Mammary epithelial cell (primary cell): ENCODE measurements at regions of chr7 and their contacts with region 1.

Region 1: GRCh38 chr7:44617225-44617890 is 10.9 kb downstream of the OGDH start:
- DNase-seq: peak; percentile 70
- H3K4me3 ChIP-seq: no peak overlapping the region
- H3K27ac ChIP-seq: peak overlapping the region; percentile 33
- H3K4me1 ChIP-seq: peaks cover 25% of the 10 kb centered on the region
- H3K27me3 ChIP-seq: no peaks in the 10 kb centered on the region
- CTCF ChIP-seq: no peak

Region 2: DNA sequence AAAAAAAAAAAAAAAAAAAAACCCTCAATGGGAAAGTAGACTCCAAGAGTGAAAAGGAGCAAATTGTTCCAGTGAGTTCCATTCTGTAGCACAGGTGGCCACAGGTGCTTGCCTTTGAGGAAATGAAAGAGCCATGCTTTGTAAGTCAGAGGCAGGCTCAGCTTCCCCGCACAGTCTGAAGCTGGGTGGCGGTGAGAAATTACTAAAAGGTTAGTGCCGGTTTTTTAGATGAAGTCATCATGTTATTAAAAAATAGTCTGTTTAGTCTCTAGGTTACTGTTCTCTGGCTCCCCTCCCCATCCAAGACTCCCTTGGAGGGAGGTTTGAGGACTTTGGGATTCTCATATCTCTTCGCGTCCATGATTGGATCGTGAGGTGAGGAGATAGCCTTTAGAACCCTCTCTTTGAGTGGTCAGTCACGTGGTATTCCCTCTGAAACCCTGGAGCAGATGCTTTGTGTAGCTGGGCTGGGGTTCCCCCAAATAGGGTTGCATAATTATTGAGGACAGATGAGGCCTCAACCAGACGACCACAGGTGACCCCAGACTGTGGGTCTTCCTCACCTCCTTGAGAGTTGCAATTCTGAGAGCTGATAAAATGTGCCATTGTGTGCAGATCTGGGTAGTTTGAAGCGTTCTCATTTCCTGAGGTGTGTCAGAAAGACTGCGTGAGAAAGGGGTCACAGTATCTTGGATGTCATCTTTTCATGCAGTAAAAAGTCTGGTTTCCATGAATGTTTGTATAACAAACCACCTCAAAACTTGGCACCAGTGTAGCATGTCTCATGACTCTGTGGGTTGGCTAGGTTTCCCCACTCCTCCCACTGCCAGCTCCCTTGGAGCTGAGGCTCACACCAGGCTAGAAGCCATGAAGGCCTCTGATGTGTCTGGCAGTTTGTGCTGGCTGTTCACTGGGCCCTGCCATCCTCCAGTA is 16.2 kb after region 1 on chr7:
- CTCF ChIA-PET with region 1: no interaction called
- dilution Hi-C with region 1: no loop called
- in situ Hi-C with region 1: no loop called
- intact Hi-C with region 1: loop called (anchors 1 kb)
- DNase-seq: peak; percentile 97
- H3K4me3 ChIP-seq: no peak overlapping the region
- H3K27ac ChIP-seq: peak overlapping the region; percentile 74
- H3K4me1 ChIP-seq: peaks cover 34% of the 10 kb centered on the region
- H3K27me3 ChIP-seq: no peaks in the 10 kb centered on the region
- CTCF ChIP-seq: no peak

Region 3: GRCh38 chr7:44638611-44639557 is 21.5 kb after region 1 on chr7:
- CTCF ChIA-PET with region 1: no interaction called
- dilution Hi-C with region 1: no loop called
- in situ Hi-C with region 1: no loop called
- intact Hi-C with region 1: loop called (anchors 1 kb)
- DNase-seq: peak; percentile 89
- H3K4me3 ChIP-seq: no peak overlapping the region
- H3K27ac ChIP-seq: peak overlapping the region; percentile 98
- H3K4me1 ChIP-seq: peaks cover 47% of the 10 kb centered on the region
- H3K27me3 ChIP-seq: no peaks in the 10 kb centered on the region
- CTCF ChIP-seq: peak in 1 of 2 donors; percentile 15

Region 4: DNA sequence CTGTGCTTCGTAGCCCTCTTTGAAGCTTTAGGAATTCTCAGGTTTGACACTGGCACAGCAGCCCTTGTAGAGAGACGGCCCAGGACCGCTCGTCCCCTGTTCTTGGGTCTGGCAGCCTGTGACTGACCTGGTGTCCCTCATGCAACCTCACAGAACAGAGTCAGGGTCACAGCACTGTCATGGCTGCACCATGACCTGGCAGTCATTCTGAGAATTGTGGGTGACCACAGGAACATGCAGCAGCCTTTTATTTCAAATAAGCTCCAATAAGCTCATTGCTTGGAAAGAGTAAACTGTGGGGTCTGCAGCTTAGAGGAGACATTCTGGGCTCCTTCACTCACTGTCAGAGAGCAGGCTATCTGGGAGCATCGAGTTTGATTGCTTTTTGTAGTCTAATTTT is 319.0 kb after region 1 on chr7:
- CTCF ChIA-PET with region 1: no interaction called
- dilution Hi-C with region 1: no loop called
- in situ Hi-C with region 1: no loop called
- intact Hi-C with region 1: no loop called
- DNase-seq: no peak
- H3K4me3 ChIP-seq: no peak overlapping the region
- H3K27ac ChIP-seq: no peak overlapping the region
- H3K4me1 ChIP-seq: no peaks in the 10 kb centered on the region
- H3K27me3 ChIP-seq: no peaks in the 10 kb centered on the region
- CTCF ChIP-seq: no peak